ENCODE measurements at regions of chr2 and their contacts with region 1.

Region 1: GRCh38 chr2:219029829-219030165 is 11.5 kb downstream of the CFAP65 start:
- DNase-seq: peak; percentile 45 to 83 (median 76)
- ATAC-seq: peak; percentile 94
- H3K4me3 ChIP-seq: no peak overlapping the region
- H3K4me3 Mint-ChIP-seq: no peak overlapping the region
- H3K27ac ChIP-seq: no peak overlapping the region
- H3K27ac Mint-ChIP-seq: no peak overlapping the region
- H3K4me1 ChIP-seq: no peaks in the 10 kb centered on the region
- H3K4me1 Mint-ChIP-seq: no peaks in the 10 kb centered on the region
- H3K27me3 ChIP-seq: peaks cover 0 to 4% of the 10 kb centered on the region in 2 experiments
- H3K27me3 Mint-ChIP-seq: peaks cover 21% of the 10 kb centered on the region
- CTCF ChIP-seq: peak; percentile 87

Region 2: GRCh38 chr2:218319813-218320365 is 709.9 kb before region 1 on chr2:
- CTCF ChIA-PET with region 1: no interaction called
- POLR2A ChIA-PET with region 1: no interaction called
- intact Hi-C with region 1: no loop called
- DNase-seq: no peak
- ATAC-seq: no peak
- H3K4me3 ChIP-seq: no peak overlapping the region
- H3K4me3 Mint-ChIP-seq: no peak overlapping the region
- H3K27ac ChIP-seq: no peak overlapping the region
- H3K27ac Mint-ChIP-seq: no peak overlapping the region
- H3K4me1 ChIP-seq: peaks cover 55% of the 10 kb centered on the region
- H3K4me1 Mint-ChIP-seq: peaks cover 68% of the 10 kb centered on the region
- H3K27me3 ChIP-seq: peaks cover 0 to 3% of the 10 kb centered on the region in 2 experiments
- H3K27me3 Mint-ChIP-seq: peaks cover 4% of the 10 kb centered on the region
- CTCF ChIP-seq: no peak

Region 3: GRCh38 chr2:218979846-218980734 is 49.7 kb before region 1 on chr2:
- CTCF ChIA-PET with region 1: interaction called, 4 read pairs
- POLR2A ChIA-PET with region 1: no interaction called
- intact Hi-C with region 1: loop called in 1 of 2 experiments (anchors 1 kb)
- DNase-seq: peak; percentile 72 to 88 (median 83)
- ATAC-seq: peak; percentile 89
- H3K4me3 ChIP-seq: peak overlapping the region; percentile 3 to 18
- H3K4me3 Mint-ChIP-seq: peak overlapping the region; percentile 76
- H3K27ac ChIP-seq: no peak overlapping the region
- H3K27ac Mint-ChIP-seq: no peak overlapping the region
- H3K4me1 ChIP-seq: peaks cover 31% of the 10 kb centered on the region
- H3K4me1 Mint-ChIP-seq: peaks cover 34% of the 10 kb centered on the region
- H3K27me3 ChIP-seq: peaks cover 49% of the 10 kb centered on the region in 2 experiments
- H3K27me3 Mint-ChIP-seq: peaks cover 64% of the 10 kb centered on the region
- CTCF ChIP-seq: peak; percentile 94

Region 4: GRCh38 chr2:219041252-219041651 is 11.5 kb after region 1 on chr2 and contains the start of gene CFAP65:
- CTCF ChIA-PET with region 1: interaction called, 37 read pairs
- POLR2A ChIA-PET with region 1: no interaction called
- intact Hi-C with region 1: no loop called
- DNase-seq: peak in 1 of 9 experiments; percentile 48
- ATAC-seq: peak; percentile 63
- H3K4me3 ChIP-seq: no peak within 1 kb of the TSS
- H3K4me3 Mint-ChIP-seq: peak within 1 kb of the TSS; percentile 72
- H3K27ac ChIP-seq: no peak within 1 kb of the TSS
- H3K27ac Mint-ChIP-seq: no peak within 1 kb of the TSS
- H3K4me1 ChIP-seq: peaks cover 3% of the 10 kb centered on the region
- H3K4me1 Mint-ChIP-seq: peaks cover 8% of the 10 kb centered on the region
- H3K27me3 ChIP-seq: peaks cover 7 to 27% of the 10 kb centered on the region in 2 experiments
- H3K27me3 Mint-ChIP-seq: peaks cover 65% of the 10 kb centered on the region
- CTCF ChIP-seq: no peak
- total RNA-seq, gene CFAP65: not detected

Region 5: DNA sequence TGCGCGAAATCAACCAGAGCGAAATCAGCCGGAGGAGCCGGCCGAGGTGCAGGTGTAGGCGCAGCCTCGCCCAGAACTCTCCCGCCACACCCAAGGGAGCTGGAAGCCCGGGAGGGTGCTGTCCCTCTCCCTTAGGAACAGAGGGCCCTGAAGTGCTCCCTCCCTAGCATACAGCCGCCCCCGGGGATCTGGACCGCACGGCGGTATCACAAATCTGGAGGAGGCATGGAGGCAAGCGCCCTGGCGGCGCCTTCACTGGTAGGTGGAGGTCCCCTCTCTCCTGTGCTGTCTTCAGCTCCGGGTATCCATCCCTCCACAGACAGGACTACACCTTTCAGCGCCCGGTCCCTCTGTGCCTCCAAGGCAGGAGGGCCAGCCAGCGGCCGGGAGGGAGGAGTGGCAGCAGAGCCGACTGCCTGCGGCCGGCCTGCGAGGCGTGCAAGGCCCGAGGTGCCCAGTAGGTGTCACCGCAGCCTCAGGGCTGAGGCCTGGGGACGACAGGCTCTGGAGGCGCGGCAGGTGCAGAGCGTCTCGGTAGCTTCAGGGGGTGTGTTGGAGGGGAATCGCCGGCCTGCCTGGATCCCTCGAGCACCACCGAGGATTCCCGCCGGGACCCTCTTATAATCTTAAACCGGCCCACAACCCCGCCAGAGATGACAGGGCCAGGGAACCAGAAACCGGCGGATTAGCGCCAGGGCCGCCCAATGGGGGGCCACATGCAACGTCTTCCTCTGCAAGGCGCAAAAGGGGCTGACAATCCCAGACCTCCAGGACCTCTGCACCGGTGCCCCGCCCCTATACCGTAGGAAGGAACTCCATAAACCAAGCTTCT is 28.1 kb after region 1 on chr2:
- CTCF ChIA-PET with region 1: interaction called, 12 read pairs
- POLR2A ChIA-PET with region 1: no interaction called
- intact Hi-C with region 1: no loop called
- DNase-seq: peak; percentile 62 to 85 (median 74)
- ATAC-seq: peak; percentile 96
- H3K4me3 ChIP-seq: no peak overlapping the region
- H3K4me3 Mint-ChIP-seq: peak overlapping the region; percentile 55
- H3K27ac ChIP-seq: no peak overlapping the region
- H3K27ac Mint-ChIP-seq: no peak overlapping the region
- H3K4me1 ChIP-seq: peaks cover 35% of the 10 kb centered on the region
- H3K4me1 Mint-ChIP-seq: peaks cover 26% of the 10 kb centered on the region
- H3K27me3 ChIP-seq: peaks cover 26 to 37% of the 10 kb centered on the region in 2 experiments
- H3K27me3 Mint-ChIP-seq: peaks cover 58% of the 10 kb centered on the region
- CTCF ChIP-seq: peak; percentile 92

Region 6: DNA sequence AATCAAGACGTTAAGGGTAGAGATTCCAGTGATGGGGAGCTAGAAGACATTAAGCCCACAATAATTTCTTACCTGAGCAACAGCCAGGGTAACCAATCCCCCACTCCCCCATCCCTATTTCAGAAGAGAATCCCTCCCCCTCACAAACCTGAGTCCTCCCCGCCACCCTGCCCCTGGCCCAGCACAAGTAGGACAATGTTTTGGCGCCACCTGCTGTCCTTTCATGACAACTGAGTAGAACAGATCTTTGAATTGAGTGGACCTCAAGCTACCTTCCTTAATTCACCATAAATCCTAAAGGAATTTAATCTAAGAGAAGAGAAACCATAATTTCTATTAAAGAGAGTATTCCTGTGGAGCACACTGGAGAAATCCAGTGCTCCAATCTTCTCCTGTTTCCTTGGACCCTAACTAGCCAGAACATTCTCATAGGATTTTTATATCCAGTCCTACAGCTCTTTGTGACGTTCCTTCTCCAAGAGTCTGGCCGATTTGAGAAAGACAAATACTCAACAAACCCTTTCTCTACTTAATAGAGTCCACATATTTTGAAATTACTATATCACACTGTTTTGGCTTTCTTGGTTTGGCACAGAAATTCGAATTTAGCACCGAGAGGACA is 89.7 kb after region 1 on chr2:
- CTCF ChIA-PET with region 1: interaction called, 11 read pairs
- POLR2A ChIA-PET with region 1: no interaction called
- intact Hi-C with region 1: loop called (anchors 1 kb)
- DNase-seq: peak in 8 of 9 experiments; percentile 34 to 70 (median 63)
- ATAC-seq: no peak
- H3K4me3 ChIP-seq: no peak overlapping the region
- H3K4me3 Mint-ChIP-seq: no peak overlapping the region
- H3K27ac ChIP-seq: no peak overlapping the region
- H3K27ac Mint-ChIP-seq: no peak overlapping the region
- H3K4me1 ChIP-seq: peaks cover 6% of the 10 kb centered on the region
- H3K4me1 Mint-ChIP-seq: peaks cover 8% of the 10 kb centered on the region
- H3K27me3 ChIP-seq: no peaks in the 10 kb centered on the region
- H3K27me3 Mint-ChIP-seq: no peaks in the 10 kb centered on the region
- CTCF ChIP-seq: peak; percentile 80

Region 7: GRCh38 chr2:219155054-219155644 is 125.4 kb after region 1 on chr2:
- CTCF ChIA-PET with region 1: interaction called, 92 read pairs
- POLR2A ChIA-PET with region 1: no interaction called
- intact Hi-C with region 1: loop called in 1 of 2 experiments (anchors 1 kb)
- DNase-seq: peak in 5 of 9 experiments; percentile 5 to 83 (median 52)
- ATAC-seq: peak; percentile 12
- H3K4me3 ChIP-seq: no peak overlapping the region
- H3K4me3 Mint-ChIP-seq: no peak overlapping the region
- H3K27ac ChIP-seq: no peak overlapping the region
- H3K27ac Mint-ChIP-seq: no peak overlapping the region
- H3K4me1 ChIP-seq: peaks cover 6% of the 10 kb centered on the region
- H3K4me1 Mint-ChIP-seq: peaks cover 7% of the 10 kb centered on the region
- H3K27me3 ChIP-seq: no peaks in the 10 kb centered on the region
- H3K27me3 Mint-ChIP-seq: no peaks in the 10 kb centered on the region
- CTCF ChIP-seq: peak; percentile 82

Region 8: GRCh38 chr2:219218732-219219701 is 189.2 kb after region 1 on chr2 and contains the start of gene ABCB6:
- CTCF ChIA-PET with region 1: no interaction called
- POLR2A ChIA-PET with region 1: no interaction called
- intact Hi-C with region 1: loop called in 1 of 2 experiments (anchors 10 kb)
- DNase-seq: peak; percentile 59 to 92 (median 87)
- ATAC-seq: peak; percentile 91
- H3K4me3 ChIP-seq: peak within 1 kb of the TSS; percentile 50 to 87
- H3K4me3 Mint-ChIP-seq: peak within 1 kb of the TSS; percentile 82
- H3K27ac ChIP-seq: peak within 1 kb of the TSS; percentile 43 to 47
- H3K27ac Mint-ChIP-seq: peak within 1 kb of the TSS; percentile 72
- H3K4me1 ChIP-seq: peaks cover 23% of the 10 kb centered on the region
- H3K4me1 Mint-ChIP-seq: peaks cover 19% of the 10 kb centered on the region
- H3K27me3 ChIP-seq: no peaks in the 10 kb centered on the region
- H3K27me3 Mint-ChIP-seq: no peaks in the 10 kb centered on the region
- CTCF ChIP-seq: no peak
- total RNA-seq, gene ABCB6: 3.4 to 3.5 TPM